Aorta (tissue), 5 donors: ENCODE measurements at regions of chr7 and their contacts with region 1.

Region 1: DNA sequence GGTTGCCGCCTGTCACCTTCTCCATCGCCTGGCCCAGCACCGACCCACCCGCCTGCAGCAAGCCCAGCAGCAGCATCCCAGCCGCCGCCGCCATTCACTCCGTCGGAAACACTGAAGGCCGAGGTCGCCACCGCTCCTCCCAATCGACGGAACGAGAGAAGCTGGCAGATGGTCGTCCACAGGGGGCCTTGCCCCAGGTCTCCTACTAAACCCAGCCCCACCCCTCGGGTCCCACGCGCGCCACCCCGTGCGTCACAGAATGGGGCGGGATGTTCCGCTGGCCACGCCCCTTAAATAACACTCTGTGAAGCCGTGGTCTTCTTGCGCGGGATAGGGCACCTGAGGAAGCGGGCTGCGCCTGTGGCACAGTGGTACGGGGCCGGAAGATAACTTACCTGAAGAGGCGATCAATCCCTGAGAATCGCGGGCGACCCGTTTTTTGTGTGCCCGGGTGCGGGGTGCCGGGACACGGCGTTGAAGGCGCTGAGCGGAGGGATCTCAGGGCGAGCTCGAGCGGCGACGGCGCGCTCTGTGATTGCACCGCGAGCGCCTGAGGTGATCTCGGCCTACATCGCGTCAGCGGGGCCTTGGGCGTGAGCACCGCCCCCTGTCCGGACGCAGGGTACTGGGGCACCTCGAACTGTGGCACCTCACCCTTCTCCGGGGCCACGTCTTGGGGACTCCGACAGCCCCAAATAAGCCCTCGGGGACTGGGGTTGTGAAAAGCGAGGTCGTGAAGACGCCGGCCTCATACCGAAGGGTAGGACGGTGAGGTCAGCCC is at the start of gene CYP51A1:
- DNase-seq: peak; percentile 93 to 97
- ATAC-seq: peak; percentile 99
- H3K4me3 ChIP-seq: peak within 1 kb of the TSS; percentile 46 to 61
- H3K27ac ChIP-seq: peak within 1 kb of the TSS; percentile 64 to 68
- H3K4me1 ChIP-seq: no peaks in the 10 kb centered on the region
- H3K27me3 ChIP-seq: no peaks in the 10 kb centered on the region
- total RNA-seq, gene CYP51A1: 30.7 to 38.4 TPM

Region 2: DNA sequence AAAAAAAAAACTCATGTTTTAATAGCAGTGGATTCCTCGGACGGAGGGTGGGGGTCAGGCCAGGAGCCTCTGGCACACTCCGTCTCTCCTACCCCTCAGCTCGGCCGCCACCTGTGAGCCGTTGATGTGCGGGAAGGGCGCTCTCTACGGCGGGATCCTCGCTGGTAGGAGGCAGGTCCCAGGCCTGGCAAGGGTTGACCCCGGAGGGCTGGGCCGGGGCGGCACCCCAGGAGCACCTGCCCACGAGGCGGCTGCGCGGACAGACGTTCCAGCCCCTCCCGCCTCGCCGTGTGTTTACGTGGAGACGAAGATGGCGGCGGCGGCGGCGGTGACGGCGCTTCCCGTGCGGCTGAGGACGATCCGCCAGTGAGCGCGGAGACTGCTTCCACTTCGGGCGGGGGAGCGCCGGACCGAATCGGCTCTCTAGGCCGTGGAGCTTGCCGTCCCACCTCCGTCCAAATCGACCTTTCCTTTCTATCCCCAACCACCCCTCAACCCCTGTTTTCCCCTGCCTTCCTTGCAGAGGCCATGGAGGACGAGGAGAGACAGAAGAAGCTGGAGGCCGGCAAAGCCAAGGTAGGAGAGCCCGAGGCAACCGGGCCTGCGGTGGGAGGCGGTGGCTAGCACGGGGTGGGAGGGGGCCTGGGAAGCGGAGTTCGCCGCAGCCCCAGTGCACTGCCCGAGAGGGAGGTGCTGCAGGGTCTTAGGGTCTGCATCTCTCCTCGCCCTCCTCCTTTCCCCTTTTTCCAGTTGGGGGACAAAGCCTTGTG is 193.7 kb before region 1 on chr7 and contains the start of gene AKAP9:
- intact Hi-C with region 1: loop called in 1 of 2 experiments (anchors 5 kb)
- DNase-seq: peak; percentile 92 to 95
- ATAC-seq: peak; percentile 95
- H3K4me3 ChIP-seq: peak within 1 kb of the TSS; percentile 72 to 77
- H3K27ac ChIP-seq: peak within 1 kb of the TSS; percentile 51 to 76
- H3K4me1 ChIP-seq: no peaks in the 10 kb centered on the region
- H3K27me3 ChIP-seq: no peaks in the 10 kb centered on the region
- total RNA-seq, gene AKAP9: 55.5 to 81.2 TPM

Region 3: GRCh38 chr7:92158660-92159575 is 24.5 kb after region 1 on chr7:
- intact Hi-C with region 1: no loop called
- DNase-seq: no peak
- ATAC-seq: no peak
- H3K4me3 ChIP-seq: no peak overlapping the region
- H3K27ac ChIP-seq: no peak overlapping the region
- H3K4me1 ChIP-seq: no peaks in the 10 kb centered on the region
- H3K27me3 ChIP-seq: no peaks in the 10 kb centered on the region

Region 4: DNA sequence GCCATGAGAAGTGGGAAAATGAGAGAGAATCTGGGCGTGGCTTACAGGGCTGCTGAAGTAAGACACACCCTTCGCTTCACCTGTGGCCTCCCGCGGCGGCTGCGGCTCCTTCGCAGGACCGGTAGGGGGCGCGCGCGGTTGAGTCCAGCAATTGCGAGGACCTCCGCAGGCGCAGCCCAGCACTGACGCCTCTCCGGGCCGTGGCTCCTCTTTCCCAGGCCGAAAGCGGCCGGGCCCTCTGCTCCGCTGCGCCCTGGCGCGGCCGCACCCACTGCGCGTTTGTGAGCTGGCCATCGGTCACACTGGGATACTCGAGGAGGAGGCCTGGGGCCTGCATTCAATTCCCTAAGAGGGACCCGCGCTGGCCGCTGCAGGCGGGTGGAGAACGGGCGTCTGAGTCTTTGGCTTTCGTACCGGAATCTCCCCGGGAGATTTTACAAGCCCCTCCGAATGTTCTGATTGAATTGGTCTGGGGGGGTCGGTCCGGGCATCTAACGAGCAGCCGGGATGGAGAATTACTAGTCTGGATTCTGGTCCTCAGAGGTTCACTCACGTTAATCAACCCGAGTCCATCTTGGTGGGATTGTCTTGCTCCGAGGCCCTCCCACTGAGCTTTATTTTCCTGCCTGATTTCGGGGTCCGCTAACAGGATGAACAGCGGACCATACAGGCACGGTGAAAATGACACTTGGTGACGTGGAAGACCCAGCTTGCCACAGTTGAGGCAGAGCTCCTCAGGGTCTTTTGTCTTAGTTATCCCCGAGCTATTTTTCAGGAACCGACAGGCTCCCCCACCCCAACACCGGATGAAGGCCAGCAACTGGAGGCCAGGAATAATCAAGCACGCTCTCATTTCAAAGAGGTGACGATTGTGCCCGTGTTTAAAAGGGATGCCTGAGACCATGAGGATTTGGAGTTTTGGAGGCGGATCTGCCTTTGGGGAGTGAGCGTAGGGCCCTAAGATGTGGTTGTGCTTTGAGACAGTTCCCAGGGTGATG is 44.8 kb after region 1 on chr7 and contains the start of gene LRRD1:
- intact Hi-C with region 1: loop called in 1 of 2 experiments (anchors 5 kb)
- DNase-seq: peak; percentile 89 to 95
- ATAC-seq: peak; percentile 98
- H3K4me3 ChIP-seq: peak within 1 kb of the TSS; percentile 36 to 74
- H3K27ac ChIP-seq: peak within 1 kb of the TSS in 1 of 2 donors; percentile 74
- H3K4me1 ChIP-seq: no peaks in the 10 kb centered on the region
- H3K27me3 ChIP-seq: no peaks in the 10 kb centered on the region
- total RNA-seq, gene LRRD1: 0.51 TPM in 1 of 2 donors, not detected in the other

Region 5: GRCh38 chr7:92447345-92448204 is 313.1 kb after region 1 on chr7 and contains the start of gene GATAD1:
- intact Hi-C with region 1: loop called (anchors 5 to 10 kb)
- DNase-seq: peak; percentile 94 to 96
- ATAC-seq: peak; percentile 99
- H3K4me3 ChIP-seq: peak within 1 kb of the TSS; percentile 66 to 98
- H3K27ac ChIP-seq: peak within 1 kb of the TSS; percentile 84 to 88
- H3K4me1 ChIP-seq: no peaks in the 10 kb centered on the region
- H3K27me3 ChIP-seq: no peaks in the 10 kb centered on the region
- total RNA-seq, gene GATAD1: 34.3 to 48.7 TPM

Region 6: DNA sequence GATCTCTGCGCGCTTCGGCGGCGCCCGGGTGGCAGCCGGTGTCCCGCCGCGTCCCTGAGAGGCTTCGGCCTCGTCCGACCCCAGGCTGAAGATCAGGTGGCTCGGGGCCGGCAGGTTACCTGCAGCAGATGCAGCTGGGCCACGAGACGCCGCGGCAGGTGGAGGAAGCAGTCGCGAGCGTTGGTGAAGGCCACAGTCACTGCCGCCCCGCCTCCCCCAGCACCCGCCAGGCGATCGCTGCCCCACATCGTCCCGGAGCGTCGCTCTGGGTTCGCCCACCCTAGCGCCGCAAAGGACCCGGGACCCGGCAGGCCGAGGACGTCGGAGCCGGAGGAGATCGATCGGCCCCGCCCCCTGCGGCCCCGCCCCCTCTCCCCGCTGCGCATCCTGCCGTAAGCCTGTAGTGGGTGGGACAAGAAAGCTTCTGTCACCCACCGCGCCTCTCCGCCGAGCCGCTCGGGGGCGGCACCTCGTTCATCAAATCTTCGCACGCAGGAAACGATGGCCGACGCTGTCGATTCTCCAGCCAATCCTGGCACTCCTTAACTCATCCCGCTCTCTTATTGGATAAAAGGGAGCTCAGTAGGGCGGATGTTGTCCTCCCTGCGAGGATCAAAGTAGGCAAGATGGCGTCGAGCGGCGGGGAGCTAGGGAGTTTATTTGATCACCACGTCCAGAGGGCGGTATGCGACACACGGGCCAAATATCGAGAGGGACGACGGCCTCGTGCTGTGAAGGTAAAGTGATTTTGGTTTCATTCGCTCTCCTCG is 393.9 kb after region 1 on chr7 and contains the starts of genes PEX1 and RBM48:
- intact Hi-C with region 1: loop called in 1 of 2 experiments (anchors 5 kb)
- DNase-seq: peak; percentile 98
- ATAC-seq: peak; percentile 99
- H3K4me3 ChIP-seq: peak within 1 kb of the TSS; percentile 84 to 97
- H3K27ac ChIP-seq: peak within 1 kb of the TSS; percentile 1 to 66
- H3K4me1 ChIP-seq: peaks cover 0 to 2% of the 10 kb centered on the region in 2 donors
- H3K27me3 ChIP-seq: no peaks in the 10 kb centered on the region
- total RNA-seq, gene PEX1: 17.1 to 18.5 TPM
- total RNA-seq, gene RBM48: 9.8 to 12.9 TPM